ENCODE measurements at regions of chr7 and their contacts with region 1.

Region 1: GRCh38 chr7:97971990-97972943 is 17.7 kb downstream of the OCM2 start:
- DNase-seq: peak; percentile 95
- H3K4me3 Mint-ChIP-seq: peak overlapping the region; percentile 96
- H3K27ac Mint-ChIP-seq: peak overlapping the region; percentile 95
- H3K4me1 Mint-ChIP-seq: peaks cover 12% of the 10 kb centered on the region
- H3K27me3 Mint-ChIP-seq: peaks cover 2% of the 10 kb centered on the region

Region 2: DNA sequence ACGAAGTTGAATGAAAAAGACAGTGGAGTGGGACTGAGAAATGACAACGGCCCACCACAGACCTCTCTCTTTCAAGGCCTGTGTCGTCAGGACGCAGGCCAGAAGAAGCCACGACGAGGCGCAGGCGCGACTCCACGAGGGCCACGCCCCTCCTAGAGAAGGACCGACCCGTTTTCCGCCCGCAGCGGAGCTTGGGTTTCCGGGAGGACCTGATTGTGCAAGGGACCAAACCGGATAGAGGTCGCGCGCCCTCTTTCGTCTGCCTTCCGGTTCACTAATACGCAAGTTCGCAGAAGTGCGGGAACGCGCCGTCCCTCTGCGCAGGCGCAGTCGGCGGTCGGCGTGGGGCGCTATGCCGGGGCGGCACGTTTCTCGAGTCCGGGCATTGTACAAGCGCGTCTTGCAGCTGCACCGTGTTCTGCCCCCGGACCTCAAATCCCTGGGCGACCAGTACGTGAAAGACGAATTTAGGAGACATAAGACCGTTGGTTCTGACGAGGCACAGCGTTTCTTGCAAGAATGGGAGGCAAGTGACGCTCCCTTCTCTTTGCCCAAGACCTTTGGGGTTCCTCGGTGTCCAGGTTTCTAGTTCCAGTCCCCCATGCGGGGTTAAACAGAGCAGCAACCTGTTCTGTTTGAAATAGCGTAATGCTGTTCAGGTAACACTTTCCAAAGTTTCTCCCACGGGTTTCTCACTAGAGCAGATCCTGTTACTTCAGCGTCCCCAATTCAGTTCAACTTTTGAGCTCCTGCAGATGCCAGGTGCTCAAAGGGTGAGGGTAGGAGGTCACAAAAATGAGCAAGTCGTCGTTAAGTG is 854.7 kb before region 1 on chr7 and contains the start of gene SDHAF3:
- intact Hi-C with region 1: loop called (anchors 1 kb)
- DNase-seq: peak; percentile 99
- H3K4me3 Mint-ChIP-seq: peak within 1 kb of the TSS; percentile 93
- H3K27ac Mint-ChIP-seq: peak within 1 kb of the TSS; percentile 95
- H3K4me1 Mint-ChIP-seq: peaks cover 26% of the 10 kb centered on the region
- H3K27me3 Mint-ChIP-seq: no peaks in the 10 kb centered on the region
- total RNA-seq, gene SDHAF3: 24.9 and 27.8 TPM in 2 replicates

Region 3: DNA sequence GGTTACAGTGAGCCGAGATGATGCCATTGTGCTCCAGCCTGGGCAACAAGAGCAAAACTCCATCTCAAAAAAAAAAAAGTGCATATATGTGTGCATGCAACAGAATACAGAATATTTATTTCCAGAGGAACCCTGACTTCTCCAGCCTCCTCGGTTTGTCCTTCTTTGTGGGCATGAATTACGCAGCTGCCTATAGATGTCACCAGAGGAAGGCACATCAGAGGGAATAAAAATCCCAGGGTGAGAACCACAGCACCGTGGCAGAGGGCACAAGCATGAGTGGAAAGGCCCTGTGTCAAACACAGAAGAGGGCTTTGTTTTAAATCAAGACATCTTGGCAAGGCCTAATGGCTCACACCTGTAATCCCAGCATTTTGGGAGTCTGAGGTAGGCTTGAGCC is 42.1 kb after region 1 on chr7:
- intact Hi-C with region 1: no loop called
- DNase-seq: no peak
- H3K4me3 Mint-ChIP-seq: no peak overlapping the region
- H3K27ac Mint-ChIP-seq: no peak overlapping the region
- H3K4me1 Mint-ChIP-seq: no peaks in the 10 kb centered on the region
- H3K27me3 Mint-ChIP-seq: no peaks in the 10 kb centered on the region

Region 4: DNA sequence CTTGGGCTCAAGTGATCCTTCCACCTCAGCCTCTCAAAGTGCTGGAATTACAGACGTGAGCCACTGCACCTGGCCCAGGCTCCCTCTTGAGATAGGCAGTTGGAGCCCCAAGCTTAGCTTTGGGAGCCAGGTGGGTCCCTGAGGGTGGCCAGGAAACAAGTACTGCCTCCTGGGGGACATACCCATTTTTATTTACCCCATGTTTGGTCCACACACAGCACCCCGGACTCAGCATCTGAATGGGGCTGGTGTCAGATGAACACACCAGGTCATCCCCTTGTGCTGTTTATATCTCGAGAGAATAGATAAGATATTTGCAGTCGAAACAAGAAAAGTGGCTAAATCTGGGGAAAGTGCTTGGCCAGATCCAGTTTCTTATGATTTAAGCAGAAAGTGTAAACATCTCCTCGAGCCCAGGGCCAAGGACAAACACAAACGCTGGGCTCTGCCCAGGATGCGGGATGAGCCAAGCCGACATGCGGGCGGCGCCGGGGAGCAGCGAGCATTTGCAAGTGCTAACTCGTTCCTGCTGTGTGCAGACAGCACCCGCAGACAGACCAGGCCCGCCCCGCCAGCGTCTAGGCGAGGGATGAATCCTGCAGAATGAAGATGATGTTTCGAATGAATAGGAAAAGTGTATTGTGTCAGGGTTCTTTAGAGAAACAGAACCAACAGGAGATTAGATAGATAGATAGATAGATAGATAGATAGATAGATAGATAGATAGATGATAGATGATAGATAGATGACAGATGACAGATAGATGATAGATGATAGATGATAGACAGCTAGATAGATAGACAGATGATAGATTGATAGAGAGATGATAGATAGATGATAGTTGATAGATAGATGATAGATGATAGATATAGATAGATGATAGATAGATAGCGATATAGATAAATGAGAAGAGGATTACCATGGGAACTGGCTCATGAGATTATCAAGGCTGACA is 62.1 kb after region 1 on chr7:
- intact Hi-C with region 1: no loop called
- DNase-seq: no peak
- H3K4me3 Mint-ChIP-seq: no peak overlapping the region
- H3K27ac Mint-ChIP-seq: no peak overlapping the region
- H3K4me1 Mint-ChIP-seq: no peaks in the 10 kb centered on the region
- H3K27me3 Mint-ChIP-seq: peaks cover 2% of the 10 kb centered on the region

Region 5: GRCh38 chr7:98266840-98267239 is 294.6 kb after region 1 on chr7:
- intact Hi-C with region 1: no loop called
- DNase-seq: no peak
- H3K4me3 Mint-ChIP-seq: no peak overlapping the region
- H3K27ac Mint-ChIP-seq: no peak overlapping the region
- H3K4me1 Mint-ChIP-seq: peaks cover 7% of the 10 kb centered on the region
- H3K27me3 Mint-ChIP-seq: no peaks in the 10 kb centered on the region

Region 6: DNA sequence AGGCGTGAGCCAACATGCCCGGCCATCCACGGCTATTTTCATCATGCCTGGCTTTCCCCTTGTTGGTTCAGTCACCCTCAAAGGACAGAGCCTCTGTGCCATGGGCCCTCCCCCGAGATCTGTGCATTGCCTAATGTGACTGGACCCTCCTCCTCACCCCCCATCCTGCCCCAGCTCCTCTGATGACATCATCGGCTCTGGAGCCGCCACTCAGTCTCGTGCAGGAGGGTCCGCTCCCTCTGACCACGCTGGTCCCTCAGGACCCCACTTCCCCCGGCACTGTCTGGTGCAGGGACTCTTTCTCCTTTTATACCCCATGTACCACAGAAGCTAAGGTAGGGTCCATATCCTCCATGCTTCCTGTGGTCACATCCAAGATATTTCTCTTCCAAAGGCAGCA is 461.8 kb after region 1 on chr7:
- intact Hi-C with region 1: no loop called
- DNase-seq: no peak
- H3K4me3 Mint-ChIP-seq: no peak overlapping the region
- H3K27ac Mint-ChIP-seq: no peak overlapping the region
- H3K4me1 Mint-ChIP-seq: peaks cover 5% of the 10 kb centered on the region
- H3K27me3 Mint-ChIP-seq: no peaks in the 10 kb centered on the region